ENCODE measurements at regions of chr15 and their contacts with region 1.

Region 1: GRCh38 chr15:23003736-23004135 is 23.6 kb upstream of the CYFIP1 start:
- DNase-seq: no peak
- H3K4me3 ChIP-seq: no peak overlapping the region
- H3K27ac ChIP-seq: no peak overlapping the region
- H3K4me1 ChIP-seq: no peaks in the 10 kb centered on the region
- CTCF ChIP-seq: no peak

Region 2: DNA sequence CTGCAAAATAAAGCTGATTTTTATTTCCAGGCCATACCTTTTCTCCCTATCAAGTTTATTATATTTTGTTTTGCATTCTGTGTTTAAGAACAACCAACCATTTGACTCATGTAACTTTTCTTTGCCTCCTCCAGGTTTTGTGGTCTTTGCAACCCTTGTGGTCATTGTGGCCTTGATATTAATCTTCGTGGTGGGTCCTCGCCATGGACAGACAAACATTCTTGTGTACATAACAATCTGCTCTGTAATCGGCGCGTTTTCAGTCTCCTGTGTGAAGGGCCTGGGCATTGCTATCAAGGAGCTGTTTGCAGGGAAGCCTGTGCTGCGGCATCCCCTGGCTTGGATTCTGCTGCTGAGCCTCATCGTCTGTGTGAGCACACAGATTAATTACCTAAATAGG is 137.7 kb before region 1 on chr15:
- CTCF ChIA-PET with region 1: no interaction called
- POLR2A ChIA-PET with region 1: no interaction called
- intact Hi-C with region 1: loop called (anchors 10 kb)
- DNase-seq: no peak
- H3K4me3 ChIP-seq: no peak overlapping the region
- H3K27ac ChIP-seq: no peak overlapping the region
- H3K4me1 ChIP-seq: no peaks in the 10 kb centered on the region
- CTCF ChIP-seq: no peak

Measured in OCI-LY7 (cell line).